Activated CD8-positive, alpha-beta T cell treated with anti-CD3 and anti-CD28 coated beads for 36 hours (primary cell): ENCODE measurements at regions of chr1 and their contacts with region 1.

Region 1: GRCh38 chr1:160951443-160952128 is 3.0 kb downstream of the ITLN2 start:
- DNase-seq: peak; percentile 88
- ATAC-seq: peak; percentile 93
- H3K4me3 Mint-ChIP-seq: no peak overlapping the region
- H3K27ac Mint-ChIP-seq: no peak overlapping the region
- H3K4me1 Mint-ChIP-seq: peaks cover 7% of the 10 kb centered on the region
- H3K27me3 Mint-ChIP-seq: no peaks in the 10 kb centered on the region
- CTCF ChIP-seq: peak; percentile 76

Region 2: DNA sequence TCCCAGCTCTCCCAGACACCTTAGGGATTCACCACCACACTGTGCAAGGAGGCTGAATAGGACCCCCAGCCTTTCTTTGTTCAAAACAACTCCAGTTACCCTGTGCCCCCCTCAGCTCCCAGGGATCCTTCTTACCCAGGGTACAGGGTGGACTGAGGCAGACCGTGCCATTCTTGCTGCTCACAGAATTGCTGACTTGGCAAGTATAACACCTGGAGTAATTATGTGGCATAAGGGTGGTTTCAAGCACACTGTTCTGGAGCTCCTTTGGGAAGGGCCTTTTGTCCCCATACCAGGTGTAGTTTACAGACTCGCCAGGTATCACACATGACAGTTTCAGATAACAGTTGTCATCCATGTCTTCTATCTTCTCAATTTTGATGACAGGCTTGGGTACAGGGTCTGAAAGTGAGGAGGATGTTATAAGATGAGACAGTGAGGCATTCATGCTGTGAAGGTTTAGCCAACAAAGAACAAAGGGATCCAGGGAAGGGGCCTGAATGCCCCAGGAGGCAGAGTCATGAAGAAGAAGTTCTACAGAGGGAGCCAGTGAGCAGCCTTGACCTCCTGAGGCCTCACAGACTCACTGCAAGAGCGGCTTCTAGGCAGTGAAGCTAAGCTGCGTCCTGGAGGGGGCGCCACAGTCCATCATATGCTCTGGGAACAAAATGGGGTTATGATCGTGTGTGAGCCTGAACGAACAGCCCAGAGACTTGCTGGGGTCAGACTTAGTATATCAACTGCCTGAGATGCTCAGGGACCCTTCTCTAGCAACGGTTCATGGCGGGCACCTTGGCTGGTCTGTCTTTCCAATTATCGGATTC is 270.3 kb before region 1 on chr1:
- CTCF ChIA-PET with region 1: interaction called, 21 read pairs
- POLR2A ChIA-PET with region 1: no interaction called
- intact Hi-C with region 1: loop called (anchors 5 kb)
- DNase-seq: peak; percentile 96
- ATAC-seq: peak; percentile 74
- H3K4me3 Mint-ChIP-seq: no peak overlapping the region
- H3K27ac Mint-ChIP-seq: peak overlapping the region; percentile 95
- H3K4me1 Mint-ChIP-seq: peaks cover 67% of the 10 kb centered on the region
- H3K27me3 Mint-ChIP-seq: no peaks in the 10 kb centered on the region
- CTCF ChIP-seq: peak; percentile 97

Region 3: GRCh38 chr1:160777486-160778089 is 174.0 kb before region 1 on chr1:
- CTCF ChIA-PET with region 1: interaction called, 157 read pairs
- POLR2A ChIA-PET with region 1: no interaction called
- intact Hi-C with region 1: loop called (anchors 5 kb)
- DNase-seq: peak; percentile 72
- ATAC-seq: peak; percentile 67
- H3K4me3 Mint-ChIP-seq: no peak overlapping the region
- H3K27ac Mint-ChIP-seq: peak overlapping the region; percentile 4
- H3K4me1 Mint-ChIP-seq: peaks cover 55% of the 10 kb centered on the region
- H3K27me3 Mint-ChIP-seq: no peaks in the 10 kb centered on the region
- CTCF ChIP-seq: peak; percentile 85

Region 4: GRCh38 chr1:160837558-160838205 is 113.9 kb before region 1 on chr1:
- CTCF ChIA-PET with region 1: interaction called, 298 read pairs
- POLR2A ChIA-PET with region 1: interaction called, 6 read pairs
- intact Hi-C with region 1: loop called (anchors 2 kb)
- DNase-seq: peak; percentile 92
- ATAC-seq: peak; percentile 90
- H3K4me3 Mint-ChIP-seq: peak overlapping the region; percentile 57
- H3K27ac Mint-ChIP-seq: peak overlapping the region; percentile 99
- H3K4me1 Mint-ChIP-seq: peaks cover 72% of the 10 kb centered on the region
- H3K27me3 Mint-ChIP-seq: no peaks in the 10 kb centered on the region
- CTCF ChIP-seq: peak; percentile 44

Region 5: GRCh38 chr1:160877221-160877620 is 74.4 kb before region 1 on chr1:
- CTCF ChIA-PET with region 1: interaction called, 12 read pairs
- POLR2A ChIA-PET with region 1: no interaction called
- intact Hi-C with region 1: no loop called
- DNase-seq: peak; percentile 28
- ATAC-seq: peak; percentile 80
- H3K4me3 Mint-ChIP-seq: no peak overlapping the region
- H3K27ac Mint-ChIP-seq: peak overlapping the region; percentile 19
- H3K4me1 Mint-ChIP-seq: peaks cover 30% of the 10 kb centered on the region
- H3K27me3 Mint-ChIP-seq: no peaks in the 10 kb centered on the region
- CTCF ChIP-seq: peak; percentile 60

Region 6: GRCh38 chr1:160981584-160982411 is 30.2 kb after region 1 on chr1:
- CTCF ChIA-PET with region 1: interaction called, 17 read pairs
- POLR2A ChIA-PET with region 1: no interaction called
- intact Hi-C with region 1: no loop called
- DNase-seq: no peak
- ATAC-seq: peak; percentile 72
- H3K4me3 Mint-ChIP-seq: peak overlapping the region; percentile 67
- H3K27ac Mint-ChIP-seq: no peak overlapping the region
- H3K4me1 Mint-ChIP-seq: peaks cover 5% of the 10 kb centered on the region
- H3K27me3 Mint-ChIP-seq: peaks cover 23% of the 10 kb centered on the region
- CTCF ChIP-seq: no peak

Region 7: GRCh38 chr1:161068306-161069234 is 117.0 kb after region 1 on chr1:
- CTCF ChIA-PET with region 1: no interaction called
- POLR2A ChIA-PET with region 1: no interaction called
- intact Hi-C with region 1: no loop called
- DNase-seq: peak; percentile 92
- ATAC-seq: peak; percentile 75
- H3K4me3 Mint-ChIP-seq: peak overlapping the region; percentile 97
- H3K27ac Mint-ChIP-seq: peak overlapping the region; percentile 98
- H3K4me1 Mint-ChIP-seq: peaks cover 56% of the 10 kb centered on the region
- H3K27me3 Mint-ChIP-seq: no peaks in the 10 kb centered on the region
- CTCF ChIP-seq: no peak